ENCODE measurements at regions of chr9 and their contacts with region 1.

Region 1: DNA sequence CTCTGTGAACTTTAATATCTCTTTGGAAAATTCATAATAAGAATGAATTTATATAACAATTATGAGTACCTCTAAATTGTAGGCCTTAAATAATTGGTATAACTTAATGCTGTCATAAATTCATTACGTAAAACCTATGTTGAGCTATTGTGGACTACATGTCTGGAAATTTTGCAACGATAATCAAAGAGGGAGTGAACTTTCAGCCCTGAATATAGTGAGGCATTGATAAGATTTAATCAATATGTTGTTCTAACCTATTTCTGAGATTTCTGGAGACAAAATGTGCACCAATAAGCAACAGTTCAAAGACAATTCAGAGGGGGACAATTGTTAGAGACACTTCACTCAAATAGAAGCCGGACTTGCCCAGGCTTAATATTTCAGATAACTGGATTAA is 499.4 kb downstream of the ELAVL2 start:
- DNase-seq: no peak
- ATAC-seq: no peak
- H3K4me3 ChIP-seq: no peak overlapping the region
- H3K4me3 Mint-ChIP-seq: no peak overlapping the region
- H3K27ac ChIP-seq: no peak overlapping the region
- H3K27ac Mint-ChIP-seq: no peak overlapping the region
- H3K4me1 ChIP-seq: no peaks in the 10 kb centered on the region
- H3K4me1 Mint-ChIP-seq: no peaks in the 10 kb centered on the region
- H3K27me3 ChIP-seq: no peaks in the 10 kb centered on the region
- H3K27me3 Mint-ChIP-seq: no peaks in the 10 kb centered on the region
- CTCF ChIP-seq: no peak

Region 2: DNA sequence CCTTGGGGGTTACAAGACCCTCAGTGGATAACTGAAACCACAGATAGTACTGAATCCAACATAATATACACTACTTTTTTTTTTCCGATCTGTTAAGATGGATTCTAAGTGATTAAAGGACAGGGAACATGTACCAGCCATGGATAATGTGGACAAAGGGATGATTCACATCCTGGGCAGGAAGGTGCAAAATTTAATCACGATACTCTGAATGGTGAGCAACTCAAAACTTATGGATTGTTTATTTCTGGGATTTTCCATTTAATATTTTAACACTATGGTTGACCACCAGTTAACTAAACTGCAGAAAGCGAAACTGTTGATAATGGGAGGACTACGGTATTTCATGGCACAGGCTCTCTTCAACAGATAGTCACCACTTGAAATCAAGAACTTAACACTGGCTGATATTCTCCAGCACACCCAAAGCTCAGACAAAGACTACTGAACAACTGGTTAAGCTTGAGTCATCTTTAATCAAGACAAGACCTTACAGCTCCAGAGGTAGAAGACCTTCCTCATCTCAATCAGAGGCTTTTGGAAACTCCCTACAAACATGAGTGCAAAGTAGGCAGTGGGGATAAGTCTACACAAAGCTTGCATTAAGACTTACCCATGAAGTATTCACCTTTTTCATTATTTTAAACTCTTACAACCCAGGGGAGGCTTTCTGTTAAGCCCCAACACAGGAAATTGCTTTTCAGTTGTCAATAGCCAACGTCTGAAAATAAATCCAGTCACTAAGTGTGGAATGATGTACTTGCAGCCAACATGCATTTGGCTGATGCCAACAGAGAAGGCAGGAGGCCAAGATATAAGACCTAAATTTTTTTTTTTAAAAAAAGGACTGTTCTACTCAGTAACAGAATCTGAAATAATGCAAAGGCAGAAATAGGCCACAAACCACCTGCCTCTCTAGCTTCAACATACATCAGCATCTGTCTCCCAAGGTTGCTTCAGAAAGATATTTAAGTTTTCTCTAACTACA is 420.8 kb after region 1 on chr9:
- CTCF ChIA-PET with region 1: no interaction called
- POLR2A ChIA-PET with region 1: no interaction called
- intact Hi-C with region 1: loop called in 1 of 2 experiments (anchors 5 kb)
- DNase-seq: no peak
- ATAC-seq: no peak
- H3K4me3 ChIP-seq: no peak overlapping the region
- H3K4me3 Mint-ChIP-seq: no peak overlapping the region
- H3K27ac ChIP-seq: no peak overlapping the region
- H3K27ac Mint-ChIP-seq: no peak overlapping the region
- H3K4me1 ChIP-seq: no peaks in the 10 kb centered on the region
- H3K4me1 Mint-ChIP-seq: no peaks in the 10 kb centered on the region
- H3K27me3 ChIP-seq: no peaks in the 10 kb centered on the region
- H3K27me3 Mint-ChIP-seq: no peaks in the 10 kb centered on the region
- CTCF ChIP-seq: no peak